Activated naive CD4-positive, alpha-beta T cell treated with anti-CD3 and anti-CD28 coated beads for 36 hours (primary cell): ENCODE measurements at regions of chr2 and their contacts with region 1.

Region 1: DNA sequence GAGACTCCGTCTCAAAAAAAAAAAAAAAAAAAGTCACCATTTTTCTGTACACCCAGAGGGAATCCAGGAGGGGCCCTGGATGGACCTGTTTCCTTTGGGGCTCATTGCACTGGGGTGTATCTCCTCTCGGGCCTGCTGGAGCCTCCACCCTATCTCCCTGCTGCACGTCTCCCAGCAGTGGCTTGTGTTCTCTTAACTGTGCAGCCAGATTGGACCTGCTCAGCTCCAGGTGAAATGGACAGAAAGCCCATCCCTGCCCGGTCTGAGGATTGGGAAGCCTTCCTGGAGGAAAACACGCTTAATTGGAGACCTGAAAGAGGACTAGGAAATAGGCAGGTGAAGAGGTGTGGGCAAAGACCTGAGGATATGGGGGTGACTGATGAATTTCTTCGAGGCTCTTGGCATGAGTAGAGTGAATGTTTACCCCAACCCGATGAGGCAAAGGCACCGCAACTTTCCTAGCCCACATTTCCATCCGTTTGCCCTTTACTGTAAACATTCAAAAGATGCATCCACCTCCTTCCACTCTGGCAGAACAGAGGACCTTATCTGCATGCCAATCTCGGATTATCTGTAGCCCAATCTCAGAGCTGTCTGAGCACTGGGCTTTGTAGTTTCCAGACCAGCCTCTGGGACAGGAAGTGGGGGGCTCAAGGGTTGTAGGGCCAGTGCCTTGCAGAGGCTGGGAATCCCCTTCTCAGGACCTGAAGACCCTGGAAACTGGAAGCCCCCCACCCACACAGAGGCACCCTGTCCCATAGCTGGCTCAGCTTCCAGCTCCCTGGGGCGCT is 2.6 kb upstream of the ZAP70 start:
- DNase-seq: no peak
- H3K4me3 Mint-ChIP-seq: peak overlapping the region; percentile 24
- H3K27ac Mint-ChIP-seq: no peak overlapping the region
- H3K4me1 Mint-ChIP-seq: peaks cover 43% of the 10 kb centered on the region
- H3K27me3 Mint-ChIP-seq: no peaks in the 10 kb centered on the region

Region 2: DNA sequence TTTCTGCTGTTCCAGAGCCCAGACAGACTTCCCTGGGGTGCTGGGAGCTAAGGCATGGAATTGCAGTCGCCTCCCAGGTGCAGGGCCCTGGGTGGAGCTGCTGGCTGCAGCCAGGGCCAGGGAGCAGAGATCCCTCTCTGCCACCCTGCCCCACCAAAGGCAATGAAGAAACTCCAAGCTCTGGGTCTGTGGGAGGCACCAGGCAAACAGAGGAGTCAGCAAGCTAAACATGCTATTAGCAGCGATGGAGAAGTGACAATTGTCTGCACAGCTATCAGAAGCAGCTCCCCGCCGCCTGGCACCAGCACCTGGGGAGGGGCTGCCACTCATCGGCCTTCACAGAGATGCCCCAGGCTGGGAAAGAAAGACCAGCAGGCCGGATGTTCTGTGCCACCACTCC is 92.9 kb before region 1 on chr2:
- CTCF ChIA-PET with region 1: no interaction called
- intact Hi-C with region 1: no loop called
- DNase-seq: no peak
- H3K4me3 Mint-ChIP-seq: no peak overlapping the region
- H3K27ac Mint-ChIP-seq: no peak overlapping the region
- H3K4me1 Mint-ChIP-seq: no peaks in the 10 kb centered on the region
- H3K27me3 Mint-ChIP-seq: no peaks in the 10 kb centered on the region

Region 3: DNA sequence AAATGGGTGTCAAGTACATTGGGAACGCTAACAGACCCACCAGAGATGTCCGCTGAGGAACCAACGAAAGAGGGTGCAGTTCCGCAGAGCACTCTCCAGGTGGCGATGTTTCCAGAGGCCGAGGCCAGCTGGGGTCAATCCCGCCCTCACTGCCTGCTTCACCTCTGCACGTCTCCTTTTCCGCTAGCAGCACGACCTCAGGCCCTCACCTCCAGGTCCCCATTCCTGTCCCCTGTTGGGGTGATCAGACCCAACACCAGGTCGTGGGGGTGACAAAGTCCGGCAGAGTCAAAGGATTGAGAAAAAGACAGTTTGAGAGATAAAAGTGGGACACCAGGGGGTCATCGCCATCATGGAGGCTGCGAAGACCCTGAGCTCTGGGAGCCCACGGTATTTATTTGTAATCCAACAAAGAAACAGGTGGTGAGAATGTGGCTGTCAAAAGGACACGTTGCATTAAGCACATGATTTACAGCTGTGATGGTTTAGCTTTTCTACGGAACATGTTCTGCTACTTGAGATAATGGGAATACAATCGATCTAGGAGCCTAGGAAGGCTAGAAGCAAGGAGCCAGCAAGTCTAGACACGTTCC is 29.9 kb after region 1 on chr2:
- CTCF ChIA-PET with region 1: interaction called, 11 read pairs
- intact Hi-C with region 1: no loop called
- DNase-seq: peak; percentile 50
- H3K4me3 Mint-ChIP-seq: no peak overlapping the region
- H3K27ac Mint-ChIP-seq: peak overlapping the region; percentile 72
- H3K4me1 Mint-ChIP-seq: peaks cover 37% of the 10 kb centered on the region
- H3K27me3 Mint-ChIP-seq: no peaks in the 10 kb centered on the region

Region 4: DNA sequence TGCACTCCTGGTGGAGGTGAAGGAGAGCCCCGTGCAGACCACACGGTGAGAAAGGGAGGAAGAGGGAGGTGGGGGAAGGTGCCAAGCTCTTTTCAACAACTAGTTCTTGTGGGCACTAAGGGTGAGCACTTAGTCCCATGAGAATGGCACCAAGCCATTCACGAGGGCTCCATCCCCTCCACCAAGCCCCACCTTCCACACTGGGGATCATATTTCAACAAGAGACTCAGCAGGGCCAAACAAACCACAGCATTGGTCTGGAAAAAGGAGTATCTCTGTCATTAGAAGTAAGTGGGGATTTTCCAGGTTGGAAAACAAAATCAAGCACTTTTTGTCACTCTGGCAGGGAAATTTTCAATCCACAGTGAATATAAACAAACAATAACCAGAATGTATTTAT is 41.0 kb after region 1 on chr2:
- CTCF ChIA-PET with region 1: interaction called, 36 read pairs
- intact Hi-C with region 1: loop called (anchors 1 kb)
- DNase-seq: no peak
- H3K4me3 Mint-ChIP-seq: no peak overlapping the region
- H3K27ac Mint-ChIP-seq: no peak overlapping the region
- H3K4me1 Mint-ChIP-seq: peaks cover 10% of the 10 kb centered on the region
- H3K27me3 Mint-ChIP-seq: no peaks in the 10 kb centered on the region

Region 5: GRCh38 chr2:98269274-98269673 is 558.5 kb after region 1 on chr2:
- CTCF ChIA-PET with region 1: no interaction called
- intact Hi-C with region 1: loop called (anchors 1 kb)
- DNase-seq: peak; percentile 23
- H3K4me3 Mint-ChIP-seq: no peak overlapping the region
- H3K27ac Mint-ChIP-seq: no peak overlapping the region
- H3K4me1 Mint-ChIP-seq: no peaks in the 10 kb centered on the region
- H3K27me3 Mint-ChIP-seq: peaks cover 10% of the 10 kb centered on the region